GM12878 (cell line): ENCODE measurements at regions of chr18 and their contacts with region 1.

Region 1: GRCh38 chr18:6960656-6961055 is 156.9 kb downstream of the LAMA1 start:
- DNase-seq: no peak
- ATAC-seq: no peak
- H3K4me3 ChIP-seq: no peak overlapping the region
- H3K27ac ChIP-seq: no peak overlapping the region
- H3K4me1 ChIP-seq: no peaks in the 10 kb centered on the region
- H3K27me3 ChIP-seq: no peaks in the 10 kb centered on the region; a peak in 2 of 4 replicates
- CTCF ChIP-seq: no peak
- EP300 ChIP-seq: no peak
- POLR2A ChIP-seq: no peak
- RAD21 ChIP-seq: no peak

Region 2: DNA sequence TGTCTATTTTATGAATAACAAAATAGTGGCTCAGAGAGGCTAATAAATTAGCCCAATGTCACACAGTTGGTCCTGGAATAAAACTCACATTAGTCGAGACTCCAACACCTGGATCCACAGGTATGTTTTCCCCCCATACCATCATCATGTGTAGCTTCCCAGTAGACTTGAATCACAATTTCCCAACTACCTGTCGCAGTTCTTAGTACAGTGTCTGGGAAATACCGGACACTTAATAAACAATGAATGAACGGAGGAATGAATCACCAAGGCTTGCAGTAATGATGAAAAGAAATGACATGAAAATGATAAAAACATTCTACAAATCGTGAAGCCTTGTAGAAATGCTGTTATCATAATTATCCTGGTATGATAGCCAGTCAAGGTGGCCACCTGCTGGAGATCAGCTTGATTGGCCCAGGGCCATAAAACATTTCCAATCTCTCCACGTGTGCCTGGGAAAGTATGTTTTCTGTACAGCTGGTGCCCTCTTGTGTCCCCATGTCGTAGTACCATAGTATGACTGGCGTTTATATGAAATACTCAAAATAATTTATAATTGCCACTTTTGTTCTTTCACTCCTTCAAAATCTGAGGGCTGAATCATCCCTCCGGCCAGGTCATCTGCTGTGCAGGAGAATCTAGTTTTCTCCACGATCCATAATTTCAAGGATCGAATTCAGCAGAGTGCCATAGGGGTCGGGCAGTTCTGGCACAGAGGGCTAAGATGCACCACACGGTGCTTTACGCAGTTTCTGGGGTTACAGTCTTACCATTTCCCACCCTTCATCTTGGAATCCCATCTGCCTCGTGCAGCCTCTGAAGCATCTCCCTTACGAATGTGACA is 61.6 kb after region 1 on chr18:
- CTCF ChIA-PET with region 1: no interaction called
- POLR2A ChIA-PET with region 1: no interaction called
- RAD21 ChIA-PET with region 1: no interaction called
- SMC1A ChIA-PET with region 1: no interaction called
- in situ Hi-C with region 1: loop called (anchors 10 kb)
- intact Hi-C with region 1: no loop called
- DNase-seq: no peak
- ATAC-seq: peak; percentile 48
- H3K4me3 ChIP-seq: no peak overlapping the region
- H3K27ac ChIP-seq: no peak overlapping the region
- H3K4me1 ChIP-seq: no peaks in the 10 kb centered on the region
- H3K27me3 ChIP-seq: no peaks in the 10 kb centered on the region; a peak in 1 of 4 replicates
- CTCF ChIP-seq: peak in 1 of 3 experiments; percentile 2; a peak in 1 of 6 replicates
- EP300 ChIP-seq: no peak
- POLR2A ChIP-seq: no peak
- RAD21 ChIP-seq: no peak